Heart left ventricle (tissue), 16 donors: ENCODE measurements at regions of chr2 and their contacts with region 1.

Region 1: GRCh38 chr2:168025487-168026202 is 221.8 kb downstream of the STK39 start:
- DNase-seq: no peak
- ATAC-seq: peak in 1 of 4 donors; percentile 41
- H3K4me3 ChIP-seq: no peak overlapping the region
- H3K27ac ChIP-seq: no peak overlapping the region
- H3K4me1 ChIP-seq: peaks cover 0 to 13% (median 0%) of the 10 kb centered on the region in 12 donors
- H3K27me3 ChIP-seq: no peaks in the 10 kb centered on the region
- CTCF ChIP-seq: no peak
- POLR2A ChIP-seq: no peak

Region 2: DNA sequence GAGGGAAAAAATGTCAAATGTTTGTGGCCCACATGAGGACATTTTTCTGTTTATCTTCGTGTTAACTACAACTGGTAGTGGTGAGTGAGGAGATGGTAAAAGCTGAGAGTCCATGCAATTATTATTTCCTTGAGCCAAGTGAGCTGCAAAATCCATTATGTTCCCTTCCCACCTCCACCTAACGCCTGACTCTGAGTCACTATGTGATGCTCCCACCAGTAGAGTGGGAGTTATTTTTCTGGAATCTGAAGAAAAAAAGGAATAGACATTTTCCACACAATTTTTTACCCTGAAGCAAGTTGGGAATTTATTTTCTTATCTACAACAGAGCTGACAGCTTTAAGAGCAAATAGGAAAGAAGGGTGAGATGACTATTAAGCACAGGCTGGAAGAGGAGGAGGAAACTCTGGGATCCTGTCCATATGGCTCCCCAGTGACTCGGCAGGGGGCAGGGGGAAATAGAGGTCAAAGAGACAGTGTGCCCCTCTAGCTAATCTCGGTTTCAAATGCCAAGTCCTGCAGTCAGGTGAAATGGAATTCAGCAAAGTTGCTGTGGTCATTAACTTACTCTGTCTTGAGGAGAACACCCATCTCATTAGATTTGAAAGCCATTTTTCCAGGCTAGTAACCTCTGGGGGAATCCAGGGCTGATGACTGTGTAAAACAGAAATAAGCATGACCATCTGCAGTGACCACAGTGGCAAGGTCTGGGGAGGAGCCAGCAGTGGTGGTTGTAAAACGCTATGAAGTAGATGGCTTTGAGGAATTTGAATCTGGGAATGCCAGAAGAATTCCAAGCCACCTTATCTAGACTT is 242.2 kb before region 1 on chr2:
- intact Hi-C with region 1: no loop called
- DNase-seq: no peak
- ATAC-seq: no peak
- H3K4me3 ChIP-seq: no peak overlapping the region
- H3K27ac ChIP-seq: no peak overlapping the region
- H3K4me1 ChIP-seq: peaks cover 0 to 5% (median 0%) of the 10 kb centered on the region in 12 donors
- H3K27me3 ChIP-seq: no peaks in the 10 kb centered on the region
- CTCF ChIP-seq: no peak
- POLR2A ChIP-seq: no peak

Region 3: GRCh38 chr2:168049609-168050008 is 24.0 kb after region 1 on chr2:
- intact Hi-C with region 1: loop called in 1 of 10 experiments (anchors 2 kb)
- DNase-seq: no peak
- ATAC-seq: no peak
- H3K4me3 ChIP-seq: no peak overlapping the region
- H3K27ac ChIP-seq: no peak overlapping the region
- H3K4me1 ChIP-seq: peaks cover 0 to 2% (median 0%) of the 10 kb centered on the region in 12 donors
- H3K27me3 ChIP-seq: no peaks in the 10 kb centered on the region
- CTCF ChIP-seq: no peak
- POLR2A ChIP-seq: no peak

Region 4: GRCh38 chr2:168091986-168092385 is 66.3 kb after region 1 on chr2:
- intact Hi-C with region 1: loop called in 1 of 10 experiments (anchors 2 kb)
- DNase-seq: no peak
- ATAC-seq: no peak
- H3K4me3 ChIP-seq: no peak overlapping the region
- H3K27ac ChIP-seq: no peak overlapping the region
- H3K4me1 ChIP-seq: peaks cover 0 to 19% (median 0%) of the 10 kb centered on the region in 12 donors
- H3K27me3 ChIP-seq: no peaks in the 10 kb centered on the region
- CTCF ChIP-seq: no peak
- POLR2A ChIP-seq: no peak